Adrenal gland (tissue), 19 donors: ENCODE measurements at regions of chr4 and their contacts with region 1.

Region 1: DNA sequence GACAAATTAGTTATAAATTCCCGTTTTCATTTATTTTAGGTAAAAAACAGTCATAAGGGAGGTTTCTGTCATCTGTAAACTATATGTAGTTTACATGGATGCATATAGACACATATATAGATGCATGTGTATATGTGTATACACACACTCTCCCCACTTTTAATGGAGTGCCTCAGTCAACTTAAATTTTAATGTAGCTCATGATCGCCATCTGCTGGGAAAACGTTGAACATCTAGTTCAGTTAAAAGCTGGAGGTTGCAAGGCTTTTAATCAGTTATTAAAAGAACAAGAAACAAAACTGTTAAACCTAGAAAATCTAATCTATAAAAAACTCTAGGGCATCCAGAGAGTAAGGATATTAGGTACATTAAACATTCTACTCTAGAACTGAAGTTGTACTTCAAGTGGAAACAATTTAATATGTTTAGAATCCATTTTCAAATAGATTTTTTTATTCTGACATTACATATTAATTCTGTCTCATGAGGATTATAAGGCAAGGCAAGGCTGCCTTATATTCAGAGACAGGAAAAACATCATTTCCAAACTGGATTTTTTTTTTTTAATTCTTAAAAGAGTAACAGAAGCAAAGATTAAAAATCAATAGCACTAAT is 122.6 kb downstream of the SHISA3 start:
- DNase-seq: peak; percentile 24 to 73 (median 51)
- H3K4me3 ChIP-seq: no peak overlapping the region
- H3K27ac ChIP-seq: no peak overlapping the region
- H3K4me1 ChIP-seq: no peaks in the 10 kb centered on the region
- H3K27me3 ChIP-seq: no peaks in the 10 kb centered on the region
- CTCF ChIP-seq: peak; percentile 49 to 80 (median 76)
- POLR2A ChIP-seq: no peak

Region 2: GRCh38 chr4:41844316-41844715 is 675.6 kb before region 1 on chr4:
- intact Hi-C with region 1: no loop called
- DNase-seq: no peak
- H3K4me3 ChIP-seq: no peak overlapping the region
- H3K27ac ChIP-seq: no peak overlapping the region
- H3K4me1 ChIP-seq: no peaks in the 10 kb centered on the region
- H3K27me3 ChIP-seq: no peaks in the 10 kb centered on the region
- CTCF ChIP-seq: no peak
- POLR2A ChIP-seq: no peak

Region 3: DNA sequence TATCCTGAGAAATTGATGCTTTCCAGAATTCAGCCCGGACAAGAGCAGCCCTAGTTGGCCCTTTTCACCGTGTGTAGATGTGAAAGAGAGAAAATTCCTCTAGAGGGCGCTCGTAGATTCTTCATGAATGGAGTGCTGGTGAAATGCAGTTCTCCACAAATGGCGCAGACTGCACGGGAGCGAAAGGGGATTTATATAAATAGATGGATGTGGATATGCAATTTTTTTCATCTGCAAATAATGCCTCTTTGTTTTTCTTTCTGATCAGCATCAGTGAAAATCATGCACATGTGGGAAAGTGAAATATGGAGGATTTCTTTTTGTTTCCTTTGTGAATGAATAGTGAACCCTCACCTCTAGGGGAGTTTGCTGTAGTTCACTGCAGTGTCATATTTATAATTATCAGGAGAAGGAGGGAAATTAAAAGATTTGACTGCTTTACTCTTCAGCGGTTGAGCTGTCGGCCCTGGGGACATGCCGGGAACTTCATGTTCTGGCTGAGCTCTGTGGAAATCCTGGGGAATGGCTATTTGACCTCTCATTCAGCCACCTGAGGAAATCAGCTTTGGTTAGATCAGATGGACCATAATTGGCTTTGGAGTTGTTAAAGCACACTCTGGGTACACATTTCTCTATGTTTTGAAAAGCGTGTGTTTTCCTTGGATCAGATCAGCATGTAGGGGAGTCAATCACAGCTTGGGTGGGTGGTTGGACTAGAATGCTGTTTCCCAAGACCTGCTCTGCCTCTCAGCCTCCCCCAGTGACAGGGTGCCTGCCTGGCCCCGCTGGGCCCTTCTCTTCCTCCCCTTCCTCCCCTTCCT is 237.6 kb before region 1 on chr4:
- intact Hi-C with region 1: loop called (anchors 2 to 5 kb)
- DNase-seq: peak; percentile 50 to 80 (median 57)
- H3K4me3 ChIP-seq: no peak overlapping the region
- H3K27ac ChIP-seq: no peak overlapping the region
- H3K4me1 ChIP-seq: peaks cover 0 to 7% of the 10 kb centered on the region in 2 donors
- H3K27me3 ChIP-seq: no peaks in the 10 kb centered on the region
- CTCF ChIP-seq: peak; percentile 52 to 80 (median 68)
- POLR2A ChIP-seq: no peak

Region 4: DNA sequence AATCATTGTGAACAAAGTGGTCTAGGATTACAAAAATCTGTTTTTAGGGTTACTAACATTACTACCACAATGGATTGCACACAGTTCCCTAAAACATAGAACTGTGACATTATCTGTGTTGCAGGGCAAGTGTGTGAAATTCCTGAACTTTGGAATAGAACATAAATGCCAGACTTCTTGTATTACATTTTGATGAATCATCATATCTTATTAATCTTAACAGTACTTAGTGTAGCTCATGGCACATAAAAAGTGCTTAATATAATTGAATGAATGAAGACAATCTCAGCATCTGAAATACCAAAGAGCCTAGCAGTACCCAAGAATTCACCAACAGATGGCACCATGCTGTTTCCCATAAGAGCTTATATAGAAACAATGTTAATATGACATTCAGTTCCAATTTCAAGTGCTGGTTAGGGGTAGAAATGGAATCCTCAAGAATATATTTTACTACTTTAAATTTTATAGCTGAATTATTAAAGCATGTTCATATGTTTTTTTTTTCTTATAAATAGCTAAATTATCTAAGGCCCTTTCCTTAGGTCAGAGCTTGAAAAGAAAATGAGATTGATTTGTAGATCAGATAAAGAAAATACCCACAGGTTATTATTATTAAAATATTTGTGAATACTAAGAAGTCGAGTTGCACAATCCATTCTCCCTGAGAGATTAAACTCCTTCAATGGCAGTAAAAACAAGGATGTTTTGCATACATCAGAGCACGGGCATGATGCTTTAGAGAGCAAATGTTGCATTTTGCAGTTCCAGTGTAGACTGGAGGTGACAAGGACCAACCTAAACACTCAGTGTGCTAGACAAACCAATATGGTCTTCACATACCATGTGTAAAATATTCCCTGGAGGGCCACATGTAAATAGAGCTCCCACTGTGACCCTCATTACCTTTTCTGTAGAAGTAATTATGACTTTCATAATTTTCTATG is 148.3 kb before region 1 on chr4:
- intact Hi-C with region 1: loop called (anchors 5 kb)
- DNase-seq: peak in 4 of 7 donors; percentile 21 to 60 (median 42)
- H3K4me3 ChIP-seq: no peak overlapping the region
- H3K27ac ChIP-seq: no peak overlapping the region
- H3K4me1 ChIP-seq: no peaks in the 10 kb centered on the region
- H3K27me3 ChIP-seq: no peaks in the 10 kb centered on the region
- CTCF ChIP-seq: peak; percentile 51 to 65 (median 58)
- POLR2A ChIP-seq: no peak